Activated CD4-positive, alpha-beta T cell treated with anti-CD3 and anti-CD28 coated beads, Interleukin-2, amount 10 ng/mL, durations not matched to agents 24 days and 14 days (primary cell): ENCODE measurements at regions of chr19 and their contacts with region 1.

Region 1: GRCh38 chr19:4723367-4724187 is at the start of gene DPP9:
- DNase-seq: peak; percentile 99
- H3K4me3 Mint-ChIP-seq: peak within 1 kb of the TSS; percentile 97
- H3K27ac Mint-ChIP-seq: peak within 1 kb of the TSS; percentile 92
- H3K4me1 Mint-ChIP-seq: peaks cover 30% of the 10 kb centered on the region
- H3K27me3 Mint-ChIP-seq: peaks cover 7% of the 10 kb centered on the region
- total RNA-seq, gene DPP9: 86.4 and 95.9 TPM in 2 replicates

Region 2: GRCh38 chr19:4342615-4343369 is 380.8 kb before region 1 on chr19:
- intact Hi-C with region 1: loop called (anchors 5 kb)
- DNase-seq: peak; percentile 98
- H3K4me3 Mint-ChIP-seq: peak overlapping the region; percentile 93
- H3K27ac Mint-ChIP-seq: peak overlapping the region; percentile 95
- H3K4me1 Mint-ChIP-seq: peaks cover 20% of the 10 kb centered on the region
- H3K27me3 Mint-ChIP-seq: no peaks in the 10 kb centered on the region

Region 3: DNA sequence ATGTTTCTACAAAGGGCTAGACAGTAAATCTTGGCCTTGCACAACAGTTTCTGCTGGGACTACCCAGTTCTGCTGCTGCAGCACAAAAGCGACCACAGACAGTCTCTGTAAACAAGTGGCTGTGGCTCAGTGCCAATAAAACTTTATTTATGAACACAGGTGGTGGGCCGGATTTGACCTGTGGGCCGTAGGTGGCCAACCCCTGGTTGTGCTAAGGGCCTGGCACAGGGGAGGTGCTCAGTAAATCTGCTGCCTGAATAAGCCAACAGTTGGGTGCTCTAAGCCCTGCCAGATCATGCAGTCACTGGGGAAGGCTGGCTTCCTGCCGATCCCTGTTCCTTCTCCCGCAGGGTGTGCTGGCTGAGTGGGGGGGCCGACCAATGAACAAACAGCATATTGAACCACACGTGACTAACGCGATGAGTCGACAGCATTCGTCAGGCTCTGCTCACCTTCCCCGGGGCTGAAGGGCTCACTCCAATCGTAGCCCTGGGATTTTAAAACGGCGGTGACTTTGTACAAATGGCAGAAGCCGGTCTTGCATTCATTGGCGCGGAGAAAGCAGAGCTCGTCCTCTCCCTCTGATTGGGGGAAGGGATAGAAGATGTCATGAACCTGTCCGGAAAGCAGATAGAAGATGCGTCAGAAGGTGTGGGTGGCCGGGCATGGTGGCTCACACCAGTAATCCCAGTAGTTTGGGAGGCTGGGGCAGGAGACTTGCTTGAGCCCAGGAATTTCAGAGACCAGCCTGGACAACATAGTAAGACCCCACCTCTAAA is 29.2 kb before region 1 on chr19:
- intact Hi-C with region 1: no loop called
- DNase-seq: no peak
- H3K4me3 Mint-ChIP-seq: no peak overlapping the region
- H3K27ac Mint-ChIP-seq: no peak overlapping the region
- H3K4me1 Mint-ChIP-seq: no peaks in the 10 kb centered on the region
- H3K27me3 Mint-ChIP-seq: no peaks in the 10 kb centered on the region

Region 4: DNA sequence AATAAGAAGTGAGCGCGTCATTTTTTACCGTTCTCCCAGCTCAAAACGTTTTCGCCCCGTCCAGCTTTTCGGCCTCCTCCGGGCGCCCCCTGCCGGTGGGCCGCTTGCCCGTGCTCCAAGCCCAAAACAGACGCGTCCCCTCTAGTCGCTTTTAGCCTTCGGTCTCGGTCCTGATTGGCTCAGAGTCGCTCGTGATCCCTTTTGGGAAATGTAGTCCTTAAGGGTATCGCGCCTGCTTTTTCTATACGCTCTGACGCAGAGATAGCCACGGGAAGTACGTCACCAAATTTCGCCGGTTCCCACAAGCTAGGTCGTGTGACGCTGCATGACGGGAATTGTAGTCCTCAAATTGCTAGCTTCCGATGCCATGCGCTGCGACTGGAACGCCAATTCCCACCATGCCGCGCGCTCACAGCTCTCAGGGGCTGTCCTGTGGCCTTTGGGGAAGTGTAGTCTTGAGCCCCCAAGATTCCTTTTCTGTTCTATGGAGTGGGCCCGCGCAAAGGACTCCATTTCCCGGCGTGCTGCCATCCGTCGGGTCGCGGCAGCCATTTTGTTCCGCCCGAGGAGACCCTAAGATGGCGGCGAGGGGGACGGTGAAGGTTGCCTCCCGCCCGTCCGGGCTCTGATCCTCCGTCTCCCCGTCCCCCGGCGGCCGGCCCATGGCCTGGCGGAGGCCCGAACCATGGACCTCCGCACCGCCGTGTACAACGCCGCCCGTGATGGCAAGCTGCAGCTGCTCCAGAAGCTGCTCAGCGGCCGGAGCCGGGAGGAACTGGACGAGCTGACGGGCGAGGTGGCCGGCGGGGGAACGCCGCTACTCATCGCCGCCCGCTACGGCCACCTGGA is 67.8 kb after region 1 on chr19 and contains the start of gene FEM1A:
- intact Hi-C with region 1: loop called (anchors 1 kb)
- DNase-seq: peak; percentile 99
- H3K4me3 Mint-ChIP-seq: peak within 1 kb of the TSS; percentile 89
- H3K27ac Mint-ChIP-seq: peak within 1 kb of the TSS; percentile 91
- H3K4me1 Mint-ChIP-seq: peaks cover 14% of the 10 kb centered on the region
- H3K27me3 Mint-ChIP-seq: no peaks in the 10 kb centered on the region
- total RNA-seq, gene FEM1A: 22.9 and 23.3 TPM in 2 replicates

Region 5: GRCh38 chr19:4909897-4910593 is 186.5 kb after region 1 on chr19:
- intact Hi-C with region 1: loop called (anchors 5 kb)
- DNase-seq: peak; percentile 99
- H3K4me3 Mint-ChIP-seq: peak overlapping the region; percentile 86
- H3K27ac Mint-ChIP-seq: peak overlapping the region; percentile 86
- H3K4me1 Mint-ChIP-seq: peaks cover 35% of the 10 kb centered on the region
- H3K27me3 Mint-ChIP-seq: no peaks in the 10 kb centered on the region

Region 6: GRCh38 chr19:4968462-4969291 is 245.1 kb after region 1 on chr19 and contains the start of gene KDM4B:
- intact Hi-C with region 1: loop called (anchors 1 kb)
- DNase-seq: peak; percentile 100
- H3K4me3 Mint-ChIP-seq: peak within 1 kb of the TSS; percentile 98
- H3K27ac Mint-ChIP-seq: peak within 1 kb of the TSS; percentile 94
- H3K4me1 Mint-ChIP-seq: peaks cover 39% of the 10 kb centered on the region
- H3K27me3 Mint-ChIP-seq: no peaks in the 10 kb centered on the region
- total RNA-seq, gene KDM4B: 49.2 and 52.0 TPM in 2 replicates

Region 7: DNA sequence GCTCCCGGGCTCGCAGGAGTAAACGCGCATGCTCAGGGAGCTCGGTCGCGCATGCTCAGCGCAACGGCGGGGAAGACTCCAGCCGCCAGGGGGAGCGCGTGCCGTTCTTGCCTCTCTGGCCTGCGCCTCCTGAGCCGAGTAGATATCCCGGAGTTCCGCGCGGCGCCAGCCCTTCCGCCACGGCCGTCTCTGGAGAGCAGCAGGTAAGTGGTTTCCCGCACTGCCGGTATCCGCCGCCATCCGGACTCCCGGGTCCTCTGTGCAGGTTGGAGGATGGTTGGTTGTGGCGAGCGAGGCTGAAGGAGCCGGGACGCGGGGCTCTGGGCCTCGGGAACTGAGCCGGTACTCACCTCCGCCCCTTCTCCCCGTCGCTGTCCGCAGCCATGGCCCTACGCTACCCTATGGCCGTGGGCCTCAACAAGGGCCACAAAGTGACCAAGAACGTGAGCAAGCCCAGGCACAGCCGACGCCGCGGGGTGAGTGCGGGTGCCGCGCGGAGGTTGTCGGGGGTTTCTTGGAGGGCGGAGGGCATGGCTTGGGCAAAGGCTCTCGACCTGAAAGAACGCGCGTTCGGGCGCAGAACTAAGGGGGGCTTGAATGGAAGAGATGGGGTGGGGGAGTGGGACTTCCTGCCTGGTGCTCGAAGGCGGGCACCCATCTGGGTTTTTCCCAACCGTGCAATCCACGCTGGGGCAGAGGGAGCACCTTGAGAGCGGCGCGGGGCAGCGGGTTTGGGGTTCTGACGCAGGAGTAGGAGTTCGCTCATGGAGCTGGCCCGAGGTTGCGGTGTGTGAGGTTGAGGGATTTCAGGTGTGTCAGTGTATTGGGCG is 966.8 kb after region 1 on chr19 and contains the start of gene RPL36:
- intact Hi-C with region 1: loop called (anchors 10 kb)
- DNase-seq: peak; percentile 100
- H3K4me3 Mint-ChIP-seq: peak within 1 kb of the TSS; percentile 100
- H3K27ac Mint-ChIP-seq: peak within 1 kb of the TSS; percentile 98
- H3K4me1 Mint-ChIP-seq: peaks cover 23% of the 10 kb centered on the region
- H3K27me3 Mint-ChIP-seq: no peaks in the 10 kb centered on the region
- total RNA-seq, gene RPL36: 1,117 and 1,132 TPM in 2 replicates